Heart right ventricle (tissue), 16 donors: ENCODE measurements at regions of chr7 and their contacts with region 1.

Region 1: DNA sequence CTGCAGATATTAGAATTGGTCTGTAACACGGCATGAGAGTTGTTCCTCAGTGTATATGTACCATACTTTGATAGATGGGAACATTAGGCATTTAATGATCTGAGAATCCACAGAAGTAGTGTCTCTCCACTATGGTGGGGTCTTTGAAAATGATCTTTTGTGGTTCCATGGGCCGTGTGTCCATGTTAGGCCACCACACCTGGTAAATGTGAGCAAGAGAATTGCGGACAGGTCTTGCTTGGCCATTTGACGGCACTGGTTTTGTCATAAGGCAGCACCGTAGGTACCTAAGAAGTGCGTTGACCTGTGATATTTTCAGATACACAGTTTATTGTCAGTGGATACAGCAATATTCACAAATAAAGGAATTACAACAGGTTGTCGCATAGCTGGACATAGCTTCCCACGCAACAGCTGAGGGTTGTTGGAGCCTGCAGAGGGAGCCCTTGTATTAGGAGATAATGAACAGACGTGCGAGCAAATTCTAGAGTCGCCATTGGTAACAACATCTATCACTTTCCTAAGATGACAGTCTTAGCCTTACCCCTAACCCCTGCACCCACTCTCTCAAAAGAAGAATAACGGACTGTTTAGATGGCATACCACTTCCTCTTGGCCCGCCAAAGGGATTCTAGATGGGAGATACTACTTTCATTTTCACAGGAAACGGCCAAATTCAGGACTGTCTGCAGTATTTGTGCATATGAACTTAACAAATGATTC is 111.4 kb downstream of the COL28A1 start:
- DNase-seq: peak; percentile 18 to 69
- ATAC-seq: peak; percentile 69 to 89 (median 82)
- H3K4me3 ChIP-seq: peak overlapping the region in 9 of 10 donors; percentile 16 to 62 (median 52)
- H3K27ac ChIP-seq: peak overlapping the region in 4 of 10 donors; percentile 10 to 48 (median 28)
- H3K4me1 ChIP-seq: peaks cover 0 to 8% (median 0%) of the 10 kb centered on the region in 9 donors
- H3K27me3 ChIP-seq: peaks cover 0 to 5% (median 0%) of the 10 kb centered on the region in 7 donors
- CTCF ChIP-seq: peak; percentile 46 to 89 (median 77)

Region 2: GRCh38 chr7:7535691-7536090 is 111.4 kb after region 1 on chr7 and contains the start of gene COL28A1:
- intact Hi-C with region 1: loop called (anchors 2 to 10 kb)
- DNase-seq: no peak
- ATAC-seq: no peak
- H3K4me3 ChIP-seq: peak within 1 kb of the TSS in 1 of 10 donors; percentile 22
- H3K27ac ChIP-seq: no peak within 1 kb of the TSS
- H3K4me1 ChIP-seq: no peaks in the 10 kb centered on the region
- H3K27me3 ChIP-seq: peaks cover 0 to 10% (median 0%) of the 10 kb centered on the region in 7 donors
- CTCF ChIP-seq: no peak
- total RNA-seq, gene COL28A1: 0.88 to 8.1 (median 1.5) TPM

Region 3: DNA sequence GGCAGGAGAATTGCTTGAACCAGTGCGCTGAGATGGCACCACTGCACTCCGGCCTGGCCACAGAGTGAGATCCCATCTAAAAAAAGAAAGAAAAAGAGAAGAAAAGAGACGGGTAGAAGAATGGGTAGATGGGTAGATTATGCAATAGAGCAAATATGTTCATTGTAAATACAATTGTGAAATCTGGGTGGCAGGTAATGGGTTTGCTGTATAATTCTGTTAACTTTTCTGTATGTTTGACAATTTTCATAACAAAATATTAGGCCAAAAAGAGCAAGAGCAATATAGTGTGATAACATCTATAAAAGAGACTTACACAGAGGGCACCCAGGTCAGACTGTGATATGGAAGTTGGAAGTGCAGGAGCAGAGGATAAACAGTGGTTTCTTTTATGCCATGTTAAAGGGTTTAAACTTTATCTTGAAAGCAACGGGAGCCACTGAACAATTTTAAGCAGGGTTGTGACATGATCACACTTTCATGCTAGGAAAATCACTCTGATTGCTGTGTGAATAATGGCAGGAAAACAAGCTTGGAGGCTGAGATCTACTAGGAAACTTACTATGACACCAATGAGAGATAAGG is 118.0 kb after region 1 on chr7:
- intact Hi-C with region 1: loop called (anchors 2 to 10 kb)
- DNase-seq: no peak
- ATAC-seq: no peak
- H3K4me3 ChIP-seq: no peak overlapping the region
- H3K27ac ChIP-seq: no peak overlapping the region
- H3K4me1 ChIP-seq: no peaks in the 10 kb centered on the region
- H3K27me3 ChIP-seq: peaks cover 0 to 5% (median 0%) of the 10 kb centered on the region in 7 donors
- CTCF ChIP-seq: no peak